ENCODE measurements at regions of chr7 and their contacts with region 1.

Region 1: GRCh38 chr7:151631968-151632749 is 112.5 kb upstream of the RHEB start:
- DNase-seq: peak; percentile 92
- ATAC-seq: peak; percentile 81
- H3K4me3 ChIP-seq: peak overlapping the region; percentile 66 to 76 (median 74)
- H3K4me3 Mint-ChIP-seq: peak overlapping the region; percentile 100
- H3K27ac ChIP-seq: peak overlapping the region; percentile 81
- H3K27ac Mint-ChIP-seq: peak overlapping the region; percentile 99
- H3K4me1 ChIP-seq: peaks cover 11 to 12% of the 10 kb centered on the region in 2 donors
- H3K4me1 Mint-ChIP-seq: peaks cover 17% of the 10 kb centered on the region
- H3K27me3 ChIP-seq: no peaks in the 10 kb centered on the region
- H3K27me3 Mint-ChIP-seq: no peaks in the 10 kb centered on the region
- CTCF ChIP-seq: peak; percentile 35

Region 2: DNA sequence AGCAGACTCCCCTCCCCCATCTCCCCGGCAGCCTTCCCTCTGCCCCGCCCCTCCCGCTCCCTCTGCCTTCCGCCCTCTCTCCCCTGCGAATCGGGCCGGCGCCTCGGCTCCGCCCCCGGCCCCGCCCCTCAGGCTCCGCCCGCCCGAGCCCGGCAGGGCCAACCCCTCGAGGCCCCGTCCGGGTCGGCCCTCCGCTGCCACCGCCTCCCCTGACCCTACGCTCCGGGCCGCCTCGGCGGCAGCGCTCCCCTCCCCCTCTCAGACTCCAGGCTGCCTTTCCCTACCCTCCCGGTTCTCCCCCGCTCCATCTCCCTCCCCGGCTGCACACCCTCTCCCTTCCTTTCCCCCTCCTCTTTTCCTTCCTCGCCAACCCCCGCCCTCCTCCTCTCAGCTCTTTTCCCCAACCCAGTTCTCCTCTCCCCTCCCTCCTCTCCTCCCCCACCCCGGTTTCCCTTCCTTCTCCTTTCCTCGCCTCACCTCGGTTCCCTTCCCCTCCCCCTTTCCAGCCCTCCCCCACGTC is 1860.4 kb before region 1 on chr7:
- CTCF ChIA-PET with region 1: no interaction called
- POLR2A ChIA-PET with region 1: no interaction called
- intact Hi-C with region 1: loop called (anchors 5 kb)
- DNase-seq: peak; percentile 89
- ATAC-seq: peak; percentile 97
- H3K4me3 ChIP-seq: peak overlapping the region in 4 of 5 experiments; percentile 53 to 74 (median 64)
- H3K4me3 Mint-ChIP-seq: peak overlapping the region; percentile 78
- H3K27ac ChIP-seq: no peak overlapping the region
- H3K27ac Mint-ChIP-seq: no peak overlapping the region
- H3K4me1 ChIP-seq: peaks cover 7 to 19% of the 10 kb centered on the region in 2 donors
- H3K4me1 Mint-ChIP-seq: peaks cover 9% of the 10 kb centered on the region
- H3K27me3 ChIP-seq: peaks cover 0 to 19% (median 1%) of the 10 kb centered on the region in 4 experiments
- H3K27me3 Mint-ChIP-seq: peaks cover 10% of the 10 kb centered on the region
- CTCF ChIP-seq: no peak

Region 3: DNA sequence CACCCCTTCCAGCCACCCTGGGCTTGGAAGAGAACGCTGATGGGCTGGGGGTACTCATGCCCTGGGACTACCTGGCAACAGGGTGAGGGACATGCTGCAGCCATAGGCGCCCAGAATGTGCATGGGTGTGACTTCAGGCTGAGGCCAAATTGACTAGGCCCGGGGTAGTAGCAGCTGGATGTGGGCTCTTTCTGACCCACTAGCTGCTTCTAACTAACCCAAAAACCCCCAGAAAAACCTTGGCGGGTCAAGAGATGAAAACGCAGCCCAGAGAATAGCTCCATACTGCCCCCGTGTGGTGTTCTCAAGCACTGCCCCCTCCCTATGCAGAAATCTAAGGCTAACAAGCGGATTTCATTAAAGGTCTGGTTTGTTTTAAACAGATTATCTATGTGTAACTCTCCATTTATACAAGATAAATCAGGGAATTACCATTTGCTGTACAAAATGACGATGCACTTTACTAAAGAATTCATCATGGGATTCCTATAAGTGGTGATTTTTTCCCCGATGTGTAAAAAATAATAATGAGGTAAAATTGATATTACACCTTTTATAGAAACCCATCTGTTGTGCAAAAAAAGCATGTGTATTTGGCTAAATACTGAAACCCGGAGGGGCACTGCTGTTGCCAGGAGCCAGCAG is 387.8 kb before region 1 on chr7:
- CTCF ChIA-PET with region 1: interaction called, 3 read pairs
- POLR2A ChIA-PET with region 1: no interaction called
- intact Hi-C with region 1: loop called (anchors 5 kb)
- DNase-seq: peak; percentile 68
- ATAC-seq: peak; percentile 12
- H3K4me3 ChIP-seq: peak overlapping the region in 3 of 5 experiments; percentile 47 to 55 (median 51)
- H3K4me3 Mint-ChIP-seq: peak overlapping the region; percentile 81
- H3K27ac ChIP-seq: no peak overlapping the region
- H3K27ac Mint-ChIP-seq: no peak overlapping the region
- H3K4me1 ChIP-seq: peaks cover 41 to 47% of the 10 kb centered on the region in 2 donors
- H3K4me1 Mint-ChIP-seq: peaks cover 41% of the 10 kb centered on the region
- H3K27me3 ChIP-seq: peaks cover 0 to 40% (median 17%) of the 10 kb centered on the region in 4 experiments
- H3K27me3 Mint-ChIP-seq: peaks cover 9% of the 10 kb centered on the region
- CTCF ChIP-seq: peak; percentile 79

Region 4: DNA sequence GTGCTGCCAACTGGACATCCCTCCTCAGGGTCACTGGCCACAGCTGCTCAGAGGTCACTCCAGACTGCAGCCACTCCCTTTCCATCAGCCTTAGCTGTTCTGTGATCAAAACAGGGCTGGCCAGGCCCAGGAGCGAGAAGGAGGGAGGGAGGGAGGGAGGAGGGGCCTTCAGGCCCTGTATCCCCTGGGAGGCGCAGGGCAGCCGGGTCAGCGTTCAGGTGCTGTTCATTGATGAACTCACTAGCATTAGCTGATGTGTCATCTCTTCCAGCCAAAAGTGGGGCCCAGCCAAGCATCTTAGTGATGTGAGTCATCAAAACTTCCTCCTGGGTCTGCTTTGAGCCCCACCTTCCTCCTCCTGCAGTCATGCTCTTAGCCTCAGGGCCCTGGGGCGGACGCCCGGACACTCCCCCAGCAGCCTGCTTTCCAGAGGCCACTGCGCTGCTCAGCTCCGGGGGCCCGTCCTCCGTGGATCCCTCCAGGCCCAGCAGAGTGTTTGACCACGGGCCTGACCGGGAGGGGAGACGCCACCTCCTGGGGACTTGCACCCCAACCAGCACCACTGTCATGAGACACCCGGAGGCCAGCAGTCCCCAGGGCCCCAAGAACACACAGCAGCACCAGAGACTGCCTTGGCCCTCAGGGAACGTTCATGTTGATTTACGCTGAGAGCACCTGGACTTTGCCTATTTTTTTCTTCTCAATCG is 95.6 kb after region 1 on chr7:
- CTCF ChIA-PET with region 1: interaction called, 3 read pairs
- POLR2A ChIA-PET with region 1: interaction called, 3 read pairs
- intact Hi-C with region 1: loop called (anchors 2 kb)
- DNase-seq: peak; percentile 20
- ATAC-seq: peak; percentile 82
- H3K4me3 ChIP-seq: no peak overlapping the region
- H3K4me3 Mint-ChIP-seq: no peak overlapping the region
- H3K27ac ChIP-seq: no peak overlapping the region
- H3K27ac Mint-ChIP-seq: peak overlapping the region; percentile 46
- H3K4me1 ChIP-seq: peaks cover 16 to 35% of the 10 kb centered on the region in 2 donors
- H3K4me1 Mint-ChIP-seq: peaks cover 34% of the 10 kb centered on the region
- H3K27me3 ChIP-seq: no peaks in the 10 kb centered on the region
- H3K27me3 Mint-ChIP-seq: no peaks in the 10 kb centered on the region
- CTCF ChIP-seq: no peak

Region 5: DNA sequence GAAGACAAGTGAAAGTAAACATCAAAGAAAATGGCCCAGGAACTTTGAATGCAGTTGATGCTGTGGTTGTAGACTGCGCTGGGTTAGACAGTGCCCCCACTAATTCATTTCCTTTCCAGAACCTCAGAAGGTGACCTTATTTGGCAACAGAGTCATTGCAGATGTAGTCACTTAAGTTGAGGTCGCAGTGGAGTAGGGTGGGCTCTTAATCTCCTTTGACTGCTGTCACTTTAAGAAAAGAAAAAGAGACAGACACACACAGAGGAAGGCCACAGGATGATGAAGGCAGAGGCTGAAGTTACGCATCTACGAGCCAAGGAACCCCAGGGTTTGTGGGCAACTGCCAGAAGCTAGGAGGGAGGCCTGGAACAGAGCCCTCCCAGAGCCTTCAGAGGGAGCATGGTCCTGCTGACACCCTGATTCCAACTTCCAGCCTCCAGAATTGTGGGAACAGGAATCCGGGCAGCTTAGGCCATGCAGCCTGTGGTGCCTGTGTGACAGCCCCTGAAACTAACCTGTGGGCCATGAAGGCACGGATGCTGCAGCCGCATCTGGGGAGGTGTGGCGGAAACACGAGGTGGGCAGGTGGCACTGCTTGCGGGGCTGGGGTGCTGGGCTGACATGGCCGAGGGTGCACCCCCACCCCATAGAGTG is 137.2 kb after region 1 on chr7:
- CTCF ChIA-PET with region 1: no interaction called
- POLR2A ChIA-PET with region 1: no interaction called
- intact Hi-C with region 1: no loop called
- DNase-seq: no peak
- ATAC-seq: no peak
- H3K4me3 ChIP-seq: no peak overlapping the region
- H3K4me3 Mint-ChIP-seq: no peak overlapping the region
- H3K27ac ChIP-seq: no peak overlapping the region
- H3K27ac Mint-ChIP-seq: no peak overlapping the region
- H3K4me1 ChIP-seq: no peaks in the 10 kb centered on the region
- H3K4me1 Mint-ChIP-seq: peaks cover 12% of the 10 kb centered on the region
- H3K27me3 ChIP-seq: no peaks in the 10 kb centered on the region
- H3K27me3 Mint-ChIP-seq: no peaks in the 10 kb centered on the region
- CTCF ChIP-seq: no peak

Region 6: GRCh38 chr7:151876899-151877777 is 245.0 kb after region 1 on chr7 and contains the start of gene PRKAG2:
- CTCF ChIA-PET with region 1: interaction called, 4 read pairs
- POLR2A ChIA-PET with region 1: no interaction called
- intact Hi-C with region 1: loop called (anchors 1 kb)
- DNase-seq: peak; percentile 86
- ATAC-seq: peak; percentile 57
- H3K4me3 ChIP-seq: peak within 1 kb of the TSS; percentile 65 to 100 (median 91)
- H3K4me3 Mint-ChIP-seq: peak within 1 kb of the TSS; percentile 98
- H3K27ac ChIP-seq: peak within 1 kb of the TSS; percentile 57 to 70
- H3K27ac Mint-ChIP-seq: peak within 1 kb of the TSS; percentile 95
- H3K4me1 ChIP-seq: peaks cover 10 to 16% of the 10 kb centered on the region in 2 donors
- H3K4me1 Mint-ChIP-seq: peaks cover 16% of the 10 kb centered on the region
- H3K27me3 ChIP-seq: no peaks in the 10 kb centered on the region
- H3K27me3 Mint-ChIP-seq: no peaks in the 10 kb centered on the region
- CTCF ChIP-seq: peak; percentile 23
- total RNA-seq, gene PRKAG2: 51.8 and 56.3 TPM in 2 replicates

Region 7: DNA sequence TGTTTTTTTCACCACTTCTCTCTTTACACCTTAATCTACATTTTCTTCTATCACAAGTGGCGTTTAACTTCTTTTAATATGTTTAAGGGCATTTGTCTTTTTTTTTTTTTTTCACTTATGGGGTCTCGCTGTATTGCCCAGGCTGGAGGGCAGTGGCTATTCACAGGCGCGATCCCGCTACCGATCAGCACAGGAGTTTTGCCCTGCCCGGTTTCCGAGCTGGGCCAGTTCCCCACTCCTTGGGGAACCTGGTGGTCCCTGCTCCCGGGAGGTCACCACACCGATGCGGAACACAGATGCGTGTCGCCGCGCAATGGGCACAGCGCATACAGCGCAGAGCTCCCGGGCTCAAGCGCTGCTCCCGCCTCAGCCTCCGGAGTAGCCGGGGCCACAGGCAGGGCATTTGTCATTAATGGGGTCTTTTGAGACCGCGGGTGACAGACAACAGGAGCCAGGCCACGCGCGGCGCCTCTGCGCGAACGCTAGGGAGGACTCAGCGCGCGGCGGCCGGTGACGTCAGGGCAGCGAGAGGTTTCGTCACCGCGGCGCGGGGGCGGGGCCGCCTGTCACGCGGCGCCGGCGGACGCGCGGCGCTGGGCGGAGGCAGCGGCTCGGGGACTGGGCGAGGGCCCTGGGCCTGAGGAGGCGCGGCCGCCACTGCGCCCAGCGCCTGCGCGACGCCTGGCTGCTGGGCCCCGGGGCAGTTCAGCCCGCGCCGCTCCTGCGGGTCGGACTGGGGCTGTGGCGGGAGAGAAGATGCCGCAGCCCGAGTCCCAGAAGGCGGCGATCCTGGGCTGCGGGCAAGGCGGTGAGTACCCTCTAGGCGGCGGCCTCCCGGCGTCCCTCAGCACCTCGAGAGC is 393.1 kb after region 1 on chr7 and contains the start of gene GALNT11:
- CTCF ChIA-PET with region 1: no interaction called
- POLR2A ChIA-PET with region 1: no interaction called
- intact Hi-C with region 1: loop called (anchors 2 kb)
- DNase-seq: peak; percentile 94
- ATAC-seq: peak; percentile 92
- H3K4me3 ChIP-seq: peak within 1 kb of the TSS; percentile 49 to 82 (median 72)
- H3K4me3 Mint-ChIP-seq: peak within 1 kb of the TSS; percentile 89
- H3K27ac ChIP-seq: peak within 1 kb of the TSS; percentile 65 to 82
- H3K27ac Mint-ChIP-seq: peak within 1 kb of the TSS; percentile 80
- H3K4me1 ChIP-seq: peaks cover 6 to 14% of the 10 kb centered on the region in 2 donors
- H3K4me1 Mint-ChIP-seq: peaks cover 16% of the 10 kb centered on the region
- H3K27me3 ChIP-seq: peaks cover 0 to 3% (median 0%) of the 10 kb centered on the region in 4 experiments
- H3K27me3 Mint-ChIP-seq: no peaks in the 10 kb centered on the region
- CTCF ChIP-seq: peak; percentile 41
- total RNA-seq, gene GALNT11: 14.5 and 15.2 TPM in 2 replicates